ENCODE measurements at regions of chr2 and their contacts with region 1.

Region 1: GRCh38 chr2:3536682-3537632 is 17.6 kb upstream of the ADI1 start:
- DNase-seq: peak in 1 of 2 experiments; percentile 41
- H3K4me3 ChIP-seq: peak overlapping the region; percentile 54
- H3K27ac ChIP-seq: peak overlapping the region; percentile 88
- H3K4me1 ChIP-seq: peaks cover 30% of the 10 kb centered on the region
- H3K27me3 ChIP-seq: no peaks in the 10 kb centered on the region
- CTCF ChIP-seq: peak; percentile 46

Region 2: DNA sequence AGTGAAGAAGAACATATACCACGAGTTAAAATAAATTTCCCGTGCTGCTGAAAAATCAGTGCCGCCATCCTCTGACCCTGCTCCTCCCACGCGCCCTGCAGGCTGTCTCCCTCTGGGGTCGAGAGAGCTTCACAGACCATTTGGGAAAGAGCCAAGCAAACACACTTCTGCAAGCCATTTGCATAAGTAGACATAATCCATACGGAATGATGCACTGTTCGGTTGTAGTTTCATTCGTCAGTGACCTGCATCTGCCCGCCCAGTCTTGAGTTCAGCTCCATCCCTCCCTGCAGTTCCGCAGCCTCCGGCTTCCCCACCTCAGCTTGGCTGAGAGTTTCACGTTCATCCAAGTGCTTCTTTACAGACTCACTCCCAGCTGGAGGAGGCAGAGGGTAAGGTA is 87.9 kb before region 1 on chr2:
- CTCF ChIA-PET with region 1: no interaction called
- POLR2A ChIA-PET with region 1: no interaction called
- intact Hi-C with region 1: no loop called
- DNase-seq: no peak
- H3K4me3 ChIP-seq: no peak overlapping the region
- H3K27ac ChIP-seq: no peak overlapping the region
- H3K4me1 ChIP-seq: no peaks in the 10 kb centered on the region
- H3K27me3 ChIP-seq: no peaks in the 10 kb centered on the region
- CTCF ChIP-seq: no peak

Region 3: GRCh38 chr2:3558205-3559014 is 21.5 kb after region 1 on chr2 and contains the start of gene RNASEH1:
- CTCF ChIA-PET with region 1: no interaction called
- POLR2A ChIA-PET with region 1: interaction called, 7 read pairs
- intact Hi-C with region 1: loop called (anchors 1 kb)
- DNase-seq: peak; percentile 97 to 98
- H3K4me3 ChIP-seq: peak within 1 kb of the TSS; percentile 81
- H3K27ac ChIP-seq: peak within 1 kb of the TSS; percentile 89
- H3K4me1 ChIP-seq: peaks cover 21% of the 10 kb centered on the region
- H3K27me3 ChIP-seq: no peaks in the 10 kb centered on the region
- CTCF ChIP-seq: no peak
- total RNA-seq, gene RNASEH1: 28.4 and 31.0 TPM in 2 replicates

Region 4: GRCh38 chr2:4340536-4340935 is 803.6 kb after region 1 on chr2:
- CTCF ChIA-PET with region 1: no interaction called
- POLR2A ChIA-PET with region 1: no interaction called
- intact Hi-C with region 1: no loop called
- DNase-seq: no peak
- H3K4me3 ChIP-seq: no peak overlapping the region
- H3K27ac ChIP-seq: no peak overlapping the region
- H3K4me1 ChIP-seq: no peaks in the 10 kb centered on the region
- H3K27me3 ChIP-seq: peaks cover 5% of the 10 kb centered on the region; the same call in 1 of the 2 replicates
- CTCF ChIP-seq: no peak